Transverse colon (tissue), 4 donors: ENCODE measurements at regions of chr6 and their contacts with region 1.

Region 1: GRCh38 chr6:116779573-116780164 is 14.2 kb upstream of the FAM162B start:
- DNase-seq: no peak
- H3K4me3 ChIP-seq: no peak overlapping the region
- H3K27ac ChIP-seq: no peak overlapping the region
- H3K4me1 ChIP-seq: no peaks in the 10 kb centered on the region
- H3K27me3 ChIP-seq: peaks cover 15% of the 10 kb centered on the region
- CTCF ChIP-seq: peak; percentile 30 to 47 (median 42)
- EP300 ChIP-seq: no peak
- POLR2A ChIP-seq: no peak

Region 2: GRCh38 chr6:116969211-116969863 is 189.7 kb after region 1 on chr6:
- in situ Hi-C with region 1: loop called in 1 of 4 experiments (anchors 25 kb)
- intact Hi-C with region 1: no loop called
- DNase-seq: peak; percentile 14
- H3K4me3 ChIP-seq: no peak overlapping the region
- H3K27ac ChIP-seq: no peak overlapping the region
- H3K4me1 ChIP-seq: peaks cover 0 to 5% (median 0%) of the 10 kb centered on the region in 4 donors
- H3K27me3 ChIP-seq: no peaks in the 10 kb centered on the region
- CTCF ChIP-seq: peak; percentile 52 to 66 (median 60)
- EP300 ChIP-seq: no peak
- POLR2A ChIP-seq: no peak